ENCODE measurements at regions of chrX and their contacts with region 1.

Region 1: DNA sequence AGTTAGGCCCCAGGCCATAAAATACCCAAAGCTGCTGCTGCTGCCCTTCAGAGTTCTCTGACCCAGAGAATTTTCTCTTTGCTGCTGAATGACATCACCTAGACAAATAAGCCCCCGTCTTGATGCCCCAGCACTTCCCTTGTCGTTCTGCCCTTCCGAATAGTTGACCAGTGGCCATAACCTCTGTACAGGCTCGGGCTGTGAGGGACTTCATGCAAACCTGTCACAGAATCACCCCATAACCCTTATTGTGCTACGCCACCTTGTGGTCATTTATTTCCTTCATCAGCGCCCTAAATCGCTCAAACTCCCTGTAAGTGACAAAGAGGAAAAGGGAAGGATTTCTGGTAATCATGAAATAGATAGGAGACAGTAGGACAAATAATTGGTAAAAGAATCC is 18.8 kb downstream of the SPACA5 start:
- DNase-seq: peak; percentile 55 to 77 (median 72)
- H3K4me3 ChIP-seq: no peak overlapping the region
- H3K27ac ChIP-seq: no peak overlapping the region
- H3K4me1 ChIP-seq: peaks cover 0 to 2% (median under 1%) of the 10 kb centered on the region in 4 experiments
- H3K27me3 ChIP-seq: no peaks in the 10 kb centered on the region

Region 2: DNA sequence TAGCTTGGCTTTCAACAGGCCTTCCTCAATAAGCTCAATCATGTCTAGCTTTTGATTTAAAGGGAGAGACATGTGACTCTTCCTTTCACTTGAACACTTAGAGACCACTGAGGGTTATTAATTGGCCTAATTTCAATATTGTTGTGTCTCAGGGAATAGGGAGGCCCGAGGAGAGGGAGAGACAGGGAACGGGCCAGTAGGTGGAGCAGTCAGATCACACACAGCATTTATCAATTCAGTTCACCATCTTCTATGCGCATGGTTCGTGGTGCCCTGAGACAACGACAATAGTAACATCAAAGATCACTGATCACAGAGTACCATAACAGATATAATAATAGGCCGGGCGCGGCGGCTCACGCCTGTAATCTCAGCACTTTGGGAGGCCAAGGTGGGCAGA is 171.1 kb before region 1 on chrX:
- CTCF ChIA-PET with region 1: interaction called, 32 read pairs
- POLR2A ChIA-PET with region 1: no interaction called
- DNase-seq: peak; percentile 36 to 65 (median 59)
- H3K4me3 ChIP-seq: no peak overlapping the region
- H3K27ac ChIP-seq: no peak overlapping the region
- H3K4me1 ChIP-seq: peaks cover 0 to 3% (median 0%) of the 10 kb centered on the region in 4 experiments
- H3K27me3 ChIP-seq: no peaks in the 10 kb centered on the region

Region 3: GRCh38 chrX:48035891-48036290 is 10.3 kb after region 1 on chrX:
- CTCF ChIA-PET with region 1: no interaction called
- POLR2A ChIA-PET with region 1: no interaction called
- DNase-seq: no peak
- H3K4me3 ChIP-seq: no peak overlapping the region
- H3K27ac ChIP-seq: no peak overlapping the region
- H3K4me1 ChIP-seq: no peaks in the 10 kb centered on the region
- H3K27me3 ChIP-seq: no peaks in the 10 kb centered on the region